Endothelial cell of umbilical vein (primary cell): ENCODE measurements at regions of chr10 and their contacts with region 1.

Region 1: GRCh38 chr10:16809074-16809718 is 8.0 kb downstream of the RSU1 start:
- DNase-seq: peak; percentile 64
- H3K4me3 ChIP-seq: no peak overlapping the region
- H3K27ac ChIP-seq: no peak overlapping the region
- H3K4me1 ChIP-seq: peaks cover 2% of the 10 kb centered on the region
- H3K27me3 ChIP-seq: no peaks in the 10 kb centered on the region
- CTCF ChIP-seq: peak; percentile 70 to 73
- POLR2A ChIP-seq: no peak

Region 2: DNA sequence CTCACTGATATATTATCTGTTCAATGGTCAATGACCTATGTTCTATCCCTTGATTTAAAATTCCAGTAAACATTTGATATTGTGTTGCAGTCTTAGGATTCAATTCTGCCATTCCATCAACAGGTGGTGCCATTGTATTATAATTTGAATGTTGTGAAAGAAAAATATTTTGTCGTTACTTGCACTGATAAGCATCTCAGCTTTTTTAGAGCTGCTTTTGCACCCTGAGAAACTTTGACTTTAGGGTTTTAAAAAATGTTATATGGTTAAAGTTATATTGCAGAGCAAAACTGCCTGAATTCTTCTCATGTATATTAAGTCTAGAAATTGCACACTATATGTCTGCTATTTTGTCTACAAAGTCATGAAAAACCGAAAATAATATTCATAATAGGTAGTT is 930.1 kb before region 1 on chr10:
- CTCF ChIA-PET with region 1: interaction called, 18 read pairs
- POLR2A ChIA-PET with region 1: no interaction called
- dilution Hi-C with region 1: no loop called
- intact Hi-C with region 1: loop called (anchors 1 kb)
- DNase-seq: peak; percentile 66
- H3K4me3 ChIP-seq: no peak overlapping the region
- H3K27ac ChIP-seq: no peak overlapping the region
- H3K4me1 ChIP-seq: no peaks in the 10 kb centered on the region
- H3K27me3 ChIP-seq: peaks cover 15 to 23% of the 10 kb centered on the region in 2 experiments
- CTCF ChIP-seq: peak; percentile 18 to 55
- POLR2A ChIP-seq: no peak

Region 3: GRCh38 chr10:16116404-16117304 is 692.5 kb before region 1 on chr10:
- CTCF ChIA-PET with region 1: interaction called, 3 read pairs
- POLR2A ChIA-PET with region 1: no interaction called
- dilution Hi-C with region 1: no loop called
- intact Hi-C with region 1: loop called (anchors 10 kb)
- DNase-seq: peak; percentile 33
- H3K4me3 ChIP-seq: no peak overlapping the region
- H3K27ac ChIP-seq: no peak overlapping the region
- H3K4me1 ChIP-seq: no peaks in the 10 kb centered on the region
- H3K27me3 ChIP-seq: no peaks in the 10 kb centered on the region
- CTCF ChIP-seq: peak in 1 of 2 donors; percentile 38
- POLR2A ChIP-seq: no peak